MCF 10A (cell line): ENCODE measurements at regions of chr3 and their contacts with region 1.

Region 1: GRCh38 chr3:149581681-149582370 is 76.0 kb downstream of the WWTR1 start:
- DNase-seq: peak; percentile 90
- H3K4me3 Mint-ChIP-seq: peak overlapping the region; percentile 26
- H3K27ac Mint-ChIP-seq: peak overlapping the region; percentile 77
- H3K4me1 Mint-ChIP-seq: peaks cover 52% of the 10 kb centered on the region
- H3K27me3 Mint-ChIP-seq: no peaks in the 10 kb centered on the region
- CTCF ChIP-seq: no peak

Region 2: GRCh38 chr3:149621218-149622005 is 39.6 kb after region 1 on chr3:
- CTCF ChIA-PET with region 1: interaction called, 3 read pairs
- POLR2A ChIA-PET with region 1: interaction called, 6 read pairs
- intact Hi-C with region 1: loop called (anchors 1 kb)
- DNase-seq: peak; percentile 78
- H3K4me3 Mint-ChIP-seq: no peak overlapping the region
- H3K27ac Mint-ChIP-seq: peak overlapping the region; percentile 28
- H3K4me1 Mint-ChIP-seq: peaks cover 40% of the 10 kb centered on the region
- H3K27me3 Mint-ChIP-seq: no peaks in the 10 kb centered on the region
- CTCF ChIP-seq: no peak

Region 3: DNA sequence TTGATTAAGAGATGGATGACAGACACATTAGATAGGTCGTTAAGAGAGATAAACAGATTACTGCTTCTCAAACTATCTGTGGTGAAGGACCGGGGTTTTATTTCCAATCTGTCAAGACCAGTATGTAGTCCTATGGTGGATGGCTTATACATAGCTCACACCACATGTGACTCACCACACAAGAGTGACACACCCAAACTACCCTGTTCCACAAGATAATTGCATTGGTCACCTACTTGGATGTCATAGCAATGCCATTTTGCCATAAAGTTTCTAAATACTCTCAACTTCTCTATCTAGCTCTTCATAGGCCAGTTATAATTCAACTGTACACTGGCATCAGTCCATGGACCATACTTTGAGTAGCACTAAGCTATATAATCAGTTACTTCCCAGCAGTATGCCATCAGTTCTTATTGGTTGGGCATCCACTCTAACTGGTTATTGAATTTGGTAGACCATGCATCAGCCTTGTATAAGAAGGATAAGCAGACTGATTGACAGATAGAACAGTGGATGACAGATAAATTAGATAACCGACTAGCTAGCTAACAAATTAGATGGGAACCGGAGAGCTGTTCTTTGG is 64.4 kb after region 1 on chr3:
- CTCF ChIA-PET with region 1: no interaction called
- POLR2A ChIA-PET with region 1: interaction called, 14 read pairs
- intact Hi-C with region 1: no loop called
- DNase-seq: peak; percentile 43
- H3K4me3 Mint-ChIP-seq: peak overlapping the region; percentile 5
- H3K27ac Mint-ChIP-seq: peak overlapping the region; percentile 68
- H3K4me1 Mint-ChIP-seq: peaks cover 49% of the 10 kb centered on the region
- H3K27me3 Mint-ChIP-seq: no peaks in the 10 kb centered on the region
- CTCF ChIP-seq: no peak

Region 4: GRCh38 chr3:150130404-150131100 is 548.7 kb after region 1 on chr3:
- CTCF ChIA-PET with region 1: no interaction called
- POLR2A ChIA-PET with region 1: no interaction called
- intact Hi-C with region 1: no loop called
- DNase-seq: no peak
- H3K4me3 Mint-ChIP-seq: no peak overlapping the region
- H3K27ac Mint-ChIP-seq: no peak overlapping the region
- H3K4me1 Mint-ChIP-seq: no peaks in the 10 kb centered on the region
- H3K27me3 Mint-ChIP-seq: no peaks in the 10 kb centered on the region
- CTCF ChIP-seq: no peak